ENCODE measurements at regions of chr3 and their contacts with region 1.

Region 1: DNA sequence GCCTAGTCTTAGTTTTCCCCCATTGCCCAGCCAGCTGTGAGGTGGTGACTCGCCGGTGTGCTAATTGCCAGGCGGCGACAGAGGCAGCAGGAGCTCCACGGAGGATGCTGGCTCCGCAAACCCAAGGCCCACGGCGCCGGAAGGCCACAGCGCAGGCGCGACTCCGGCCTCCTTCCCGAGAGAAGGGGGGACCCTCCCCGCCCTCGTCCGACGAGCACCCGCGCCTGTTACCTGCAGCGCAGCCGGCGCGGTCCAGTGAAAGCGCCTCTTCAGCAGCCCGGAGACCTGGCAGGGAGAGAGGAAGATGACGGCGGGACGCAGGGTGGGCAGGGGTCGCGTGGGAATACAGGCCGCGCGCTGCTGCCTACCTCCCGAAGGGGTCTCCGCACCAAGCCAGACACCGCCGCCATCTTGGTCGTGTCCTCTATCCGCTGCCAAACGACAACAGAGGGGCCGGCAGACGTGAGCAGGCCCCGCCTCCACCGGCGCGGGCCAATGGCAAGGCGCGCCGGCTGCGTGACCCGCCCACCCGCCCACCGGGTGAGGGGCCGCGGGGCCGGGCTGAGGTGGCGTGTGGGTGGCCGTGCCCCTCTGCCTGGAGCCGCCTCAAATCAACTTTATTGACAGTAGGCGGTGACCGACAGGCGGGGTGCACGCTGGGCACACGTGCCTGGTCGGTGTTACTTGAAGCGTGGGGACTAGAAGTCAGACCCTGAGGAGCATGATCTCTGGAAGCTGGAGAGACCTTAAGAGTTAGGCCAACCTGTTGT is at the start of gene PDHB:
- DNase-seq: peak; percentile 95
- ATAC-seq: peak; percentile 97 to 99
- total RNA-seq, gene PDHB: 121 to 146 TPM

Region 2: GRCh38 chr3:58161435-58162398 is 271.9 kb before region 1 on chr3:
- intact Hi-C with region 1: no loop called
- DNase-seq: peak; percentile 82
- ATAC-seq: peak in 1 of 2 donors; percentile 33

Region 3: DNA sequence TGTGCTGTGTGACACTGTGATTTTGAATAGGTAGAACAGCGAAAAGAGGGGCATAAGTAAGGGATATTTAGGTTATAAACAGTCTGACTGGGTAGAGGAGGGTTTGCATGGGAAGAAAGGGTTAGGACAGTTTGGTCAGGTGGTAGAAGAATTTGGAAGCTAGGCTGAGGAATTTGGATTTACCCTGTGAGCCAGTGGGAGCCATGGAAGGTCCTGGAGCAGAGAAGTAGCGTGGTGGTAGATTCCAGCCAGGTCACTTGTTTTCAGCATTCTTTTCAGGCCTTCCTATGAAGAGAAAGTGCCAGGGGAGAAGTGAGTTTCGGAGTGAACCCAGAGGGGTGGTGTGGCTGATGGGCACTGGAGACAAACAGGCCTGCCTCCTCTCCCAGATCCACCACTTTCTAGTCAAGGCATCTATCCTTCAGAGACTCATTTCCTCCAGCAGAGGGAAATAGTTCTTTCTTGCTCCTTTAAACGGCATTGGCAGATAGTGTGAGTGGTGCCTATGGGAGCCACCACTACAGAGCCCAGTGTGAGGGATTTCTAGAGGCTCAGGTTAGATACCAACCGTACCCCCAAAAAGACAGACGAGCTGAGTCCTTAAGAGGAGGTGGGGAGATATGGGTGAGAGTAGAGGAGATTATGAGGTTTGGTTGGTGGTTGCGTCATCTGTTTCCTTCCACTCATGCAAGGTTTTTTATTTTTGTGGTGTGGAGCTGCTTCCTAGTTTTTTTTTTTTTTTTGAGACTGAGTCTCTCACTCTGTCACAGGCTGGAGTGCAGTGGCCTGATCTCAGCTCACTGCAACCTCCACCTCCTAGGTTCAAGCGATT is 79.6 kb before region 1 on chr3:
- intact Hi-C with region 1: no loop called
- DNase-seq: no peak
- ATAC-seq: peak in 1 of 2 donors; percentile 27

Region 4: DNA sequence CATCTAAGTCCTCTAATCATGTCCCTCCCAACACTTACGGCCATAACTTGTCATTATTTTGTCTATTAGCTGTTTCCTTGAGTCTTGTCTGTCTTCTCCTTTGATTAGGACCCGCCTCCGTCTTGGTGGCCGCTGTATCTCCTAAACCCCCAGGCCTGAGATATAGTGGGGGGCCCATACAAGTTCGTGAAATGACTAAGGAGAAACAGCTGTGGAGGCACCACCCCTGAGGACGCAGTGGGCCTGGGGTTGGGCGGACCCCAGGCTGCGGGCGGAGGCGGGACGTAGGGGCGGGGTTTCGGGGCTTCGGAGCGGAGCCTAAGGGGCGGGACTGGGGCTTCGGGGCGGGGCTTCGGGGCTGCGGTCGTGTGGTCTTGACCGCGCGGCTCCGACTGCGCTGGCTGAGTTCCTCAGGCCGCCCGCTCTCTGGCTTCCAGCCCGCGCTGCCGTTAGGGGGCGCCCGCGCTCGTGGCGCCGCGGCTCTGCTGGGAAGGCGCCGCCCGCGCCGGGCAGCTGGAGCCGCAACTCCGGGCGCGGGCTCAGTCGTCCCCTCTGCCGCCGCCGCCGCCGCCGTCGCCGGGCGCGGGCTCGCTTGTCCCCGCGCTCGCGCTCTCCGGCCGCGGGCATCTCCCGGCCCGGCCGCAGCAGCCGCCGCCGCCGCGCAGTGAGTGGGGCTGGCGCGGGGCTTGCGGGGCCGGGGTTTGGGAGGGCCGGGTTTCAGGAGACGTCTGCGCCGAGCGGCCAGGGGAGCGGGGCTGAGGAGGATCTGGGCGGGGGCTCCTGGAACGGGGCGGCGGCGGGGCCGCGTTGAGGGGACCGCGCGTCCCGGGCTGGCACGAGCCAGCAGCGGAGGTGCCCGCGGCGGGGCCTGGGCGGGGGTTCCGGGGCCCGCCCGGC is 58.2 kb after region 1 on chr3 and contains the start of gene KCTD6:
- intact Hi-C with region 1: loop called in 1 of 2 experiments (anchors 5 kb)
- DNase-seq: peak; percentile 95
- ATAC-seq: peak; percentile 96 to 97
- total RNA-seq, gene KCTD6: 5.3 to 7.1 TPM

Measured in left cardiac atrium (tissue), 4 donors.